Activated CD4-positive, alpha-beta memory T cell treated with anti-CD3 and anti-CD28 coated beads for 36 hours (primary cell): ENCODE measurements at regions of chr7 and their contacts with region 1.

Region 1: GRCh38 chr7:140062528-140063299 is at the start of gene PARP12:
- DNase-seq: peak; percentile 89
- H3K4me3 Mint-ChIP-seq: peak within 1 kb of the TSS; percentile 80
- H3K27ac Mint-ChIP-seq: peak within 1 kb of the TSS; percentile 42
- H3K4me1 Mint-ChIP-seq: peaks cover 34% of the 10 kb centered on the region
- H3K27me3 Mint-ChIP-seq: no peaks in the 10 kb centered on the region
- total RNA-seq, gene PARP12: 26.7 to 30.6 TPM

Region 2: DNA sequence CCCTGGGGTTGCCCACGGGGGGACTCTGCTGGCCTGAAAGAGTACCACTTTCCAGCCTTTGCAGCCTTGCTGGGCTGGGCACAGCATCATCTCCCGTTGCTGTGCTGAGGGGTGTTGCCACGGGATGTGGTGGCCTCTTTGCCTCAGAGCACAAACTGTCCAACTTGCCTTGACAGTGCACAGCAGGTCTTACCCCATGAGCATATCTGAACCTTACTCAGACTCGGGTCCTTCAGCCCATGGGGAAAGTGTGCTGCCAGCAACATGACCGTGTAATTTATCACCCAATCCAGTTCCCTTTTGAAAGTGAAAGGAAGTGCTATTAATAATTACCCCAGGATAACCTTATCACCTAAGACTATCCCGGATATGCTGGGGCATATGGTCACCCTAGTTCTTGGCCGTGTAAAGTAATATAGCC is 186.9 kb before region 1 on chr7:
- CTCF ChIA-PET with region 1: no interaction called
- POLR2A ChIA-PET with region 1: no interaction called
- intact Hi-C with region 1: no loop called
- DNase-seq: no peak
- H3K4me3 Mint-ChIP-seq: no peak overlapping the region
- H3K27ac Mint-ChIP-seq: no peak overlapping the region
- H3K4me1 Mint-ChIP-seq: peaks cover 10% of the 10 kb centered on the region
- H3K27me3 Mint-ChIP-seq: no peaks in the 10 kb centered on the region

Region 3: DNA sequence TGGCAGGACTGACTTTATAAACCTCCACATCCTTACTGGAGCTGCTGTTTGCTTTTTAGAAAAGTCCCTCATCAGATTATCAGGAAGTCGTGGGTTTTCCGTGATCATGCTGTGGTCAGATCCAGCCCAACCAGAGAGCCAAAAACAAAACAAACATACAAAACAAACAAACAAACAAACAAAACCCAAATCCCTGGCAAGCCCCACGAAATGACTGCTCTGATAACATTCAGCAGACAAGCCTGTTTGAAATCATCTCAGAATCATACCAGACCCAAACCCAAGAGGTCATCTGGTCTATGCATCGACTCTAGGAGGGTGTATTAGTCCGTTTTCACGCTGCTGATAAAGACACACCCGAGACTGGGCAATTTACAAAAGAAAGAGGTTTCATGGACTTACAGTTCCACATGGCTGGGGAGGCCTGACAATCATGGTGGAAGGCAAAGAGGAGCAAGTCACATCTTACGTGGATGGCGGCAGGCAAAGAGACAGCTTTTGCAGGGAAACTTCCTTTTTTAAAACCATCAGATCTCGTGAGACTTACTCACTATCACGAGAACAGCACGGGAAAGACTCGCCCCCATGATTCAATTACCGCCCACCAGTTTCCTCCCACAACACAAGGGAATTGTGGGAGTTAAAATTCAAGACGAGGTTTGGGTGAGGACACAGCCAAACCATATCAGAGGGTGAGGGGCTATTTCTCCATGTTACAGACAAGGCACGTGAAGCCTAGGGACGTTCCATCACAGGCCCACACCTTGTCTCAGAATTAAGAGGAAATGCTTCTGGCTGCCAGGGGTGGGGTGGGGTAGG is 85.7 kb before region 1 on chr7:
- CTCF ChIA-PET with region 1: no interaction called
- POLR2A ChIA-PET with region 1: no interaction called
- intact Hi-C with region 1: no loop called
- DNase-seq: peak; percentile 15
- H3K4me3 Mint-ChIP-seq: no peak overlapping the region
- H3K27ac Mint-ChIP-seq: no peak overlapping the region
- H3K4me1 Mint-ChIP-seq: peaks cover 17% of the 10 kb centered on the region
- H3K27me3 Mint-ChIP-seq: no peaks in the 10 kb centered on the region

Region 4: DNA sequence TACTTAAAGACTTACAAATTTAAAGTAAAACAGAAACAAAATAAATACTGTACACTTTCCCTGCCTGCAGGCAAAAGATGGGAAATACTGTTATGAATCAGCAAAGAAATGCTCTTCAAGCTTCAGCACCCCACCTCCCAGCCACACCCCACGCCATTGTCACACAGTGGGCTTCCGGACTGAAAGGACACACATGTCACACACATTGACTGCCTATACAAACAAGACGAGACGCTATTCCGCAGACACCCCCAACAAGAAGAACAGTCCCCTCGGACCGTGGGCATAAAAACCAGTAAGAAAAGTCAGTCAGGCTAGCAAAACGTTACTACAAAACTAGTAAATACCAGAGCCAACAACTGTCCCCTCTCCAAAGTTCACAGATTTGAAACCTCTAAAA is 22.3 kb after region 1 on chr7:
- CTCF ChIA-PET with region 1: no interaction called
- POLR2A ChIA-PET with region 1: interaction called, 3 read pairs
- intact Hi-C with region 1: loop called (anchors 2 kb)
- DNase-seq: peak; percentile 71
- H3K4me3 Mint-ChIP-seq: no peak overlapping the region
- H3K27ac Mint-ChIP-seq: peak overlapping the region; percentile 26
- H3K4me1 Mint-ChIP-seq: peaks cover 23% of the 10 kb centered on the region
- H3K27me3 Mint-ChIP-seq: no peaks in the 10 kb centered on the region

Region 5: GRCh38 chr7:140136073-140136472 is 73.4 kb after region 1 on chr7:
- CTCF ChIA-PET with region 1: no interaction called
- POLR2A ChIA-PET with region 1: no interaction called
- intact Hi-C with region 1: no loop called
- DNase-seq: no peak
- H3K4me3 Mint-ChIP-seq: no peak overlapping the region
- H3K27ac Mint-ChIP-seq: no peak overlapping the region
- H3K4me1 Mint-ChIP-seq: peaks cover 20% of the 10 kb centered on the region
- H3K27me3 Mint-ChIP-seq: no peaks in the 10 kb centered on the region

Region 6: GRCh38 chr7:140230861-140231770 is 168.4 kb after region 1 on chr7:
- CTCF ChIA-PET with region 1: no interaction called
- POLR2A ChIA-PET with region 1: interaction called, 3 read pairs
- intact Hi-C with region 1: loop called (anchors 5 kb)
- DNase-seq: peak; percentile 78
- H3K4me3 Mint-ChIP-seq: peak overlapping the region; percentile 79
- H3K27ac Mint-ChIP-seq: peak overlapping the region; percentile 99
- H3K4me1 Mint-ChIP-seq: peaks cover 32% of the 10 kb centered on the region
- H3K27me3 Mint-ChIP-seq: no peaks in the 10 kb centered on the region

Region 7: GRCh38 chr7:140581411-140581810 is 518.7 kb after region 1 on chr7:
- CTCF ChIA-PET with region 1: no interaction called
- POLR2A ChIA-PET with region 1: no interaction called
- intact Hi-C with region 1: no loop called
- DNase-seq: no peak
- H3K4me3 Mint-ChIP-seq: no peak overlapping the region
- H3K27ac Mint-ChIP-seq: no peak overlapping the region
- H3K4me1 Mint-ChIP-seq: no peaks in the 10 kb centered on the region
- H3K27me3 Mint-ChIP-seq: no peaks in the 10 kb centered on the region

Region 8: GRCh38 chr7:141551094-141551781 is 1488.5 kb after region 1 on chr7 and contains the start of gene AGK:
- CTCF ChIA-PET with region 1: no interaction called
- POLR2A ChIA-PET with region 1: no interaction called
- intact Hi-C with region 1: loop called (anchors 5 kb)
- DNase-seq: peak; percentile 87
- H3K4me3 Mint-ChIP-seq: peak within 1 kb of the TSS; percentile 91
- H3K27ac Mint-ChIP-seq: peak within 1 kb of the TSS; percentile 87
- H3K4me1 Mint-ChIP-seq: peaks cover 31% of the 10 kb centered on the region
- H3K27me3 Mint-ChIP-seq: no peaks in the 10 kb centered on the region
- total RNA-seq, gene AGK: 50.2 to 57.2 TPM